Posterior cingulate gyrus (tissue), 11 donors: ENCODE measurements at regions of chr21 and their contacts with region 1.

Region 1: GRCh38 chr21:31731802-31732596 is at the start of gene SCAF4:
- DNase-seq: peak; percentile 85 to 98 (median 90)

Region 2: GRCh38 chr21:31558962-31559367 is 173.0 kb before region 1 on chr21:
- intact Hi-C with region 1: loop called (anchors 5 kb)
- DNase-seq: peak; percentile 94 to 99 (median 96)

Region 3: DNA sequence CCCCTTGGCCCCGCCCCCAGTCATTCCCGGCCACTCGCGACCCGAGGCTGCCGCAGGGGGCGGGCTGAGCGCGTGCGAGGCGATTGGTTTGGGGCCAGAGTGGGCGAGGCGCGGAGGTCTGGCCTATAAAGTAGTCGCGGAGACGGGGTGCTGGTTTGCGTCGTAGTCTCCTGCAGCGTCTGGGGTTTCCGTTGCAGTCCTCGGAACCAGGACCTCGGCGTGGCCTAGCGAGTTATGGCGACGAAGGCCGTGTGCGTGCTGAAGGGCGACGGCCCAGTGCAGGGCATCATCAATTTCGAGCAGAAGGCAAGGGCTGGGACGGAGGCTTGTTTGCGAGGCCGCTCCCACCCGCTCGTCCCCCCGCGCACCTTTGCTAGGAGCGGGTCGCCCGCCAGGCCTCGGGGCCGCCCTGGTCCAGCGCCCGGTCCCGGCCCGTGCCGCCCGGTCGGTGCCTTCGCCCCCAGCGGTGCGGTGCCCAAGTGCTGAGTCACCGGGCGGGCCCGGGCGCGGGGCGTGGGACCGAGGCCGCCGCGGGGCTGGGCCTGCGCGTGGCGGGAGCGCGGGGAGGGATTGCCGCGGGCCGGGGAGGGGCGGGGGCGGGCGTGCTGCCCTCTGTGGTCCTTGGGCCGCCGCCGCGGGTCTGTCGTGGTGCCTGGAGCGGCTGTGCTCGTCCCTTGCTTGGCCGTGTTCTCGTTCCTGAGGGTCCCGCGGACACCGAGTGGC is 72.3 kb before region 1 on chr21 and contains the start of gene SOD1:
- intact Hi-C with region 1: loop called (anchors 1 kb)
- DNase-seq: peak; percentile 92 to 100 (median 98)